ENCODE measurements at regions of chr16 and their contacts with region 1.

Region 1: DNA sequence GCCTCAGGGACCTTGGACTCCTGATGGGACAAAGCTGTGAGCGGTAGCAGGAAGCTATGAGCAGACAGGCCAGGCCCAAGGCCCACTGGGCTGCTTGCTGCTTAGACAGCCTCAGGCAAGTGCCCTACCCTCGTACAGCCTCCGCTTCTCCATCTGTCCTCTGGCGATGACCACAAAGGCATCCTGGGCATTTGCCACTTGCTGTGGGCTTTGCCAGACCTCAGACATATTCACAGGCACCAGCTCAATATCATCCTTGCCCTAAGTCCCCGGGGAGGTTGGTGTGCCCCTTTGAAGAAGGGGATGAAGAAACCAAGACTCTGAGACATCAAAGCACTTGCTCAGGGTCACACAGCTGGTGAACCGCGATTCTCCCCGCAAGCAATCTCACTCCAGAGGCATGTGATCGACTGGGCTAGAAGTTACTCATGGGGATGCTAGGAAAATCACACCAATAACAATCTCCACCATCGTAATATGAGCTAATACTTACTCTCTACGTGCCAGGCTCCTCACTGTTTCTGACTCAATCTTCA is 21.7 kb downstream of the PPL start:
- DNase-seq: no peak
- H3K4me3 ChIP-seq: no peak overlapping the region
- H3K27me3 ChIP-seq: no peaks in the 10 kb centered on the region
- CTCF ChIP-seq: no peak

Region 2: DNA sequence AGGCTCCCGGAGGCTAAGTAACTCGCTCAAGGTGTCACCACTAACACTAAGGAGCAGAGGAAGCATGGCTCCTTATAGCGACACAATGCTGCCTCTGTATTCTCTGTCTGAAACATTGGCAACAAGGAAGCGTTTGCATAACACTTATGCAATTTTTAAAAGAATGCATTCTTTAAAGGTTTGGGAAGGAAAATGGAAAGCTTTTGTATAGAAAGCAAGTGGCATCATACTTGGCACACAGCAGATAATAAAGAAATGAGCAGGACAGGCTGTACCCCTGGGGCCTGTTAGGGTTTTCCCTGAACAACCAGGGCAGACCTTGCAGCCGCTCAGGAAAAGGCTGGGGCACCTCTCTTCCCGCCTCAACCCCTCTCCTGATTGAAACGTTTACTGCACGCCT is 15.3 kb before region 1 on chr16:
- CTCF ChIA-PET with region 1: no interaction called
- POLR2A ChIA-PET with region 1: interaction called, 14 read pairs
- DNase-seq: no peak
- H3K4me3 ChIP-seq: no peak overlapping the region
- H3K27me3 ChIP-seq: peaks cover 2% of the 10 kb centered on the region
- CTCF ChIP-seq: no peak

Region 3: DNA sequence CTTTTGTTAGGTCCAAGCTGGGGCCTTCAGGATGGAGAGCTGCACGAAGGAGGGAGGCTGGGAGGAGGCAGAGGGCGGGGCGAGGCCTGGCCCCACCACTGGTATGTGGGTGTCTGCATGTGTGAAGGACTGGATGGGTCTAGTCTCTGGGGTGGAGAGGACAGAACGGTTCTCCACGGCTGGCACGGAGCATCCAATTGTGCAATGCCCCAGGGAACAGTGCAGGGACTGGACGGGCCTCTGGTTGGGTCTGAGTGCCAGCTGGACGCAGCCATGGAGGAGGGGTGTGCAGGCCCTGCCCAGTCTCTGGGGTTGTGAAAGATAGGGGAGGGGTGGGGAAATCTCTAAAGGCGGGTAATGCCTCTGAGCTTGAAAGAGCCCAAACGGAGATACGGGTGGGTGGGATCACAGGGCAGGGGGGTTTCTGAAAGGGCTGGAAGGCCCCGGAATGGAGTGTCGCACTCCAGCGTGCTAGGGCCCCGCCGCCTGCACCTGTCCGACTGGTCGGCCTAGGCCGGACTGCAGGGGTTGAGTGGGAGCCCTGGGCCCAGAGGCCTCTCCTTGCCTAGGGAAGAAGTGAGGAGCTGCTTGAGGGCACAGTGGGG is 20.1 kb after region 1 on chr16:
- CTCF ChIA-PET with region 1: no interaction called
- POLR2A ChIA-PET with region 1: no interaction called
- DNase-seq: peak; percentile 15
- H3K4me3 ChIP-seq: no peak overlapping the region
- H3K27me3 ChIP-seq: peaks cover 20% of the 10 kb centered on the region
- CTCF ChIP-seq: no peak

Region 4: DNA sequence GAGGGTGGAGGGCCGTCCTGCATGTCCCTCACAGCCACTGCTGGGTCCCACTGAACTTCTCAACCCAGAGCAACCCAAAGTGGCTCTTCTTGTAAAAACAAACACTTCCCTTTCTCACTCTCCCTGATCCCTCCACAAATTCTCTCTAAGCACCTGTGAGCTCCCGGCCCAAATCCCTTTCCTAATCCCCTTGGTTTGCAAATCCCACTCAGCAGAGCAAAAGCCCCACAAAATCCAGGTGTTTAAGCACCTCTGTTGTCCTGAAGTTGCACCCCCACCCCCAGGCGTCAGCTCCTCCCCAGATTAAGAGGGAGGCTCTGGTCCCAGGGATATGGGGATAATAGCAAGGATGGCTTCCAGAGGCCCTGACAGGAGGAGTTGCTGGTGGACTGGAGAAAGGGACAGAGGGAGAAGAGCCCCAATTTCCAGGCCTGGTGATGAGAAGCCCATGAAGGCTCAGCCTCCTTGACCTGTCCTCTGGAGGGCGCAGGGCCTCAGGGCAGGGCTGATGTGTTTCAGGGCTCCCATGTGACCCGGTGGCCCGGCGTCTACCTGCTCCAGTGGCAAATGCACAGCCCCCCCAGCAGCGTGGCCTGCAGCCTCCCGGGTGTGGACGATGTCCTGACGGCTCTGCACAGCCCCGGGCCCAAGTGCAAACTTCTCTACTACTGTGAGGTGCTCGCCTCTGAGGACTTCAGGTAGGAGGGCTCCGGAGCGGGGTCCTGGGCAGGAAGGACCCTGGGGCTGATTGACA is 95.5 kb after region 1 on chr16:
- CTCF ChIA-PET with region 1: no interaction called
- POLR2A ChIA-PET with region 1: no interaction called
- DNase-seq: no peak
- H3K4me3 ChIP-seq: no peak overlapping the region
- H3K27me3 ChIP-seq: peaks cover 3% of the 10 kb centered on the region; the same call in 1 of the 2 replicates
- CTCF ChIP-seq: no peak

Measured in BJ (cell line).